ENCODE measurements at regions of chr7 and their contacts with region 1.

Region 1: GRCh38 chr7:12322284-12322902 is 81.3 kb downstream of the VWDE start:
- DNase-seq: no peak
- H3K4me3 Mint-ChIP-seq: no peak overlapping the region
- H3K27ac Mint-ChIP-seq: no peak overlapping the region
- H3K4me1 Mint-ChIP-seq: no peaks in the 10 kb centered on the region
- H3K27me3 Mint-ChIP-seq: no peaks in the 10 kb centered on the region

Region 2: DNA sequence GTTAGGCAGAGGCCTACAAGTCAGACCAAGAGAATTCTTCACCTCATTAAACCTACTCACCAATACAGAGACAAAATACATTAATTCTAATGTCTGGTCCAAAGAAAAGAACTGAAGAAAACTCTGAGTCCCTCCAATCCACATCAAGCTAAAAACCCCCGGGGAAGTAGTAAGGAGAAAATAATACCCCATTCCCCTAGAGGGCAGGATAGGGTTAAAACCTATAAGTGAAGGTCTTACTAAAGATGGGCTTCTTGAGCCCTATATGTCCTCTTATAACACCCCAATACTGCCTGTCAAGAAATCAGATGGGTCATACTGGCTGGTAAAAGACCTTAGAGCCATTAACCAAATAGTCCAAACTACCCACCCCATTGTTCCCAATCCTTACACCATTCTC is 252.6 kb before region 1 on chr7:
- CTCF ChIA-PET with region 1: interaction called, 10 read pairs
- POLR2A ChIA-PET with region 1: no interaction called
- DNase-seq: no peak
- H3K4me3 Mint-ChIP-seq: no peak overlapping the region
- H3K27ac Mint-ChIP-seq: no peak overlapping the region
- H3K4me1 Mint-ChIP-seq: peaks cover 3% of the 10 kb centered on the region
- H3K27me3 Mint-ChIP-seq: no peaks in the 10 kb centered on the region

Region 3: GRCh38 chr7:12291870-12292269 is 30.5 kb before region 1 on chr7:
- CTCF ChIA-PET with region 1: no interaction called
- POLR2A ChIA-PET with region 1: no interaction called
- DNase-seq: no peak
- H3K4me3 Mint-ChIP-seq: no peak overlapping the region
- H3K27ac Mint-ChIP-seq: no peak overlapping the region
- H3K4me1 Mint-ChIP-seq: no peaks in the 10 kb centered on the region
- H3K27me3 Mint-ChIP-seq: no peaks in the 10 kb centered on the region